ENCODE measurements at regions of chr19 and their contacts with region 1.

Region 1: DNA sequence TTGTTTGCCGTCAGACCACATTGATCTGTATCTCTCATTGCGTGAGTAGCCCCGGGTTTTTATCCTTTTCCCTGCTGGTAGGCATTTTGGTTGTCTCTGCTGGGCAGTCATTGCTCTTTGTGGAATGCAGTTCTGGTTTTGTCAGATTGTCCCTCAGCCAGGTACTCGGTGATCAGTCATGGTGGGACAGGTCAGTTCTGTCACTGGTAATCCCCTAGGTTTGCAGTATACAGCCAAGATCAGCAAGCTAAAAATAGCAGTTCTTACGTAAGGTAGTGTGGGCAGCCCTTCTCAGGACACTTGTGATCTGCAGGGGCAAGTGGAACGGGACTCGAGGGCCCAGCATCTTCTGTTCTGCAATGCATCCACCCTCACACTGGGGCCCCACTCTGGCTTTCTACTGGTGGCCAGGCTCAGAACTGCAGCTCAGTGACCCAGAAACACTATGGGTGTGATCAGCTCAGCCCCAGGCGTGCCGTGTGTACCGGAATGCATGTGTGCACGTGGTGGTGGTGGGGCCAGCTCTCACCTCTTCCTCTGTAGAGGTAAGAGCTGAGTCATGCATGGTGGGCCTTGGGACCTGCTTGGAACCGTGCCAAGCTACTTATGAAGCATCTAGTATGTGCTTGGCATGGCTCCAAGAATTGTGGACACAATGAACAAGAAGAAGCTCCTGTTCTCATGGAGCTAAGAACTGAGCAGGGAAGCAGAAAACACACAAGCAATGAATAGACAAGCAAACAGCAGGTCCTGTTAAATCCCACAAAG is 6.3 kb downstream of the PLEKHF1 start:
- DNase-seq: peak; percentile 81 to 96 (median 86)
- H3K4me3 ChIP-seq: peak overlapping the region; percentile 14 to 46
- H3K4me3 Mint-ChIP-seq: peak overlapping the region; percentile 62 to 96 (median 76)
- H3K27ac ChIP-seq: peak overlapping the region; percentile 92
- H3K27ac Mint-ChIP-seq: peak overlapping the region; percentile 93 to 100 (median 98)
- H3K4me1 ChIP-seq: peaks cover 97% of the 10 kb centered on the region
- H3K4me1 Mint-ChIP-seq: peaks cover 58 to 96% (median 79%) of the 10 kb centered on the region in 4 donors
- H3K27me3 ChIP-seq: no peaks in the 10 kb centered on the region
- H3K27me3 Mint-ChIP-seq: no peaks in the 10 kb centered on the region

Region 2: DNA sequence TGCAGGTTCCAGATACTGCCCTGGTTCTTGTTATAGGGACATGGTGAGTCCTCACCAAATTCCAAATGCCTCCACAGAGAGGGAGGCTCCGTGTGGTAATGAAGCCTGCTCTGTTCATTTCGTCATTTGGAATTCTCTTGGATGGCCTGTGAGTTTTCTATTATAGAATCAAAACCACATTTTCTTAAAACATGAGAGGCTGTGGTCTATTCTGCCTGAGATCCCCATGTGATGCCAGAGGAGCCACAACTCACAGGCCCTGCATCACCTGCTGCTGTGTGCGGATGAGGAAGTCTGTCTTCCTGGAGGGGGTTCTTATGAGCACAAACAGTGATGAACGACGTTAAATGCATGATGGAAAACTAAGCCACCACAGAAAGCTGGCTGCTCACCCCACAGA is 723.0 kb before region 1 on chr19:
- CTCF ChIA-PET with region 1: no interaction called
- POLR2A ChIA-PET with region 1: no interaction called
- intact Hi-C with region 1: no loop called
- DNase-seq: no peak
- H3K4me3 ChIP-seq: no peak overlapping the region
- H3K4me3 Mint-ChIP-seq: no peak overlapping the region
- H3K27ac ChIP-seq: no peak overlapping the region
- H3K27ac Mint-ChIP-seq: no peak overlapping the region
- H3K4me1 ChIP-seq: no peaks in the 10 kb centered on the region
- H3K4me1 Mint-ChIP-seq: no peaks in the 10 kb centered on the region
- H3K27me3 ChIP-seq: no peaks in the 10 kb centered on the region
- H3K27me3 Mint-ChIP-seq: peaks cover 0 to 2% of the 10 kb centered on the region in 2 donors

Region 3: GRCh38 chr19:29622138-29623070 is 49.2 kb before region 1 on chr19:
- CTCF ChIA-PET with region 1: interaction called, 75 read pairs
- POLR2A ChIA-PET with region 1: interaction called, 93 read pairs
- intact Hi-C with region 1: no loop called
- DNase-seq: peak; percentile 22 to 55 (median 36)
- H3K4me3 ChIP-seq: no peak overlapping the region
- H3K4me3 Mint-ChIP-seq: peak overlapping the region in 7 of 8 donors; percentile 19 to 85 (median 71)
- H3K27ac ChIP-seq: peak overlapping the region; percentile 35
- H3K27ac Mint-ChIP-seq: peak overlapping the region; percentile 73 to 94 (median 91)
- H3K4me1 ChIP-seq: peaks cover 52% of the 10 kb centered on the region
- H3K4me1 Mint-ChIP-seq: peaks cover 40 to 56% (median 47%) of the 10 kb centered on the region in 4 donors
- H3K27me3 ChIP-seq: no peaks in the 10 kb centered on the region
- H3K27me3 Mint-ChIP-seq: no peaks in the 10 kb centered on the region